ENCODE measurements at regions of chr2 and their contacts with region 1.

Region 1: DNA sequence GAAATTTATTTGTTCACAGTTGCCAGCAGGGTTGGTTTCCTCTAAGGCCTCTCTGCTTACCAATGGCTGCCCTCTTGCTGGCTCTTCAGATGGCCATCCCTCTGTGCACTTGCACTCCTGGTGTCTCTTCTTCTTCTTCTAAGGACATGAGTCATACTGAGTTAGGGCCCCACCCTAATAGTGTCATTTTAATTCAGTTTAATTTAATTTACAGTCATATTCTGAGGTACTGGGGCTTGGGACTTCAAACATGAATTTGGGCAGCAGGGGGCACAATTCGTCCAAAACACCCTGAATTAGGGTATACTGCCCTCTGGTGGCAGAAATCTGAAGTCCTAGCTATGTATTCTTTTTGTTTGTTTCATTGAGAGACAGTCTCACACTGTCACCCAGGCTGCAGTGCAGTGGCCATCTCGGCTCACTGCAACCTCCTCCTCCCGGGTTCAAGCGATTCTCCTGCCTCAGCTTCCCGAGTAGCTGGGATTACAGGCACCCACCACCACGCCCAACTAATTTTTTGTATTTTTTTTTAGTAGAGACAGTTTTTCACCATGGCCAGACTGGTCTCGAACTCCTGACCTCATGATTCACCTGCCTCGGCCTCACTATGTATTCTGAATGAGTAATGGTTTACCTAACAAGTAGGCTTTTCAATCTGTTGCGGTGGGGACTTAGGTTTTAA is 19.8 kb downstream of the SLC4A1AP start:
- DNase-seq: peak; percentile 91
- H3K4me3 ChIP-seq: no peak overlapping the region
- H3K27ac ChIP-seq: peak overlapping the region; percentile 97
- H3K4me1 ChIP-seq: peaks cover 25% of the 10 kb centered on the region
- H3K27me3 ChIP-seq: no peaks in the 10 kb centered on the region
- CTCF ChIP-seq: peak; percentile 89 to 99
- POLR2A ChIP-seq: no peak

Region 2: DNA sequence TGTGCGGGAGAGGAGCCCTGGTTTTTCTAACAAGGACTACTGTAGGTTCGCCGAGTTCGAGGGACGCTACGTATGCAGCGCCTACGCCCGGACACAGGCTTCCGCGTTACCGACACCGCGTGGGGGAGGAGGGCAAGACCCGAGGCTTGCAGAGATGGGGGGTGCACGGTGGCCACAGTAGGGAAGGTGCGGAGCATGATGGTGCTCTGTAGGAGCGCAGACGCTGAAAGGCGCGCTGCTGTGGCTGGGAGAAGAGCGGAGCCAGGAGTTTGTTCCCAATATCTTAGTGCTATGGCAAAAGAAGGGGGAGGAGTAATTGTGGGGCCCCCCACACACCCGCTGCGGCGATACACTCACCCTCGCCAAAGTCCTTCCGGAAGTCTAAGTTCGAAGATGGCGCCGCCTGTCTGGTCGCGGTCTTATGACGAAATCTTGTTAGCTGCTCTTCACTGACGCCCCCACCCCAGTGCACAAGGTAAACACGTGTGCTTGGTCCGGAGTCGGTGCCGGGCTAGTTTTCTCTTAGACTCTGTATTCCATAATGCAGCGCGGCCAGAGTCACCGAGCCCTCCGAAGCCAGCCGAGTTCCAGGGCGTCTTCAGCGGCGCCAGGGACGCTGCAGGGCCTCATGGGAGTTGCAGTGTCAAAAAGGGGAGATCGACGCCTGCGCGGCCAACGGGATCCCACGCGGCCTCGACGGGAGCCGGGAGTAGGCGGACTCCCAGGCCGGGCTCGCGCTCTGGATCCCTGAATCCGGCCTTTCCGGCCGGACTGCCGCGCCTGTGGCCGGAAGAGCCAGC is 326.9 kb before region 1 on chr2 and contains the start of gene GTF3C2:
- CTCF ChIA-PET with region 1: no interaction called
- POLR2A ChIA-PET with region 1: no interaction called
- dilution Hi-C with region 1: no loop called
- intact Hi-C with region 1: loop called (anchors 1 kb)
- DNase-seq: peak; percentile 98
- H3K4me3 ChIP-seq: peak within 1 kb of the TSS; percentile 40 to 90 (median 63)
- H3K27ac ChIP-seq: peak within 1 kb of the TSS; percentile 83
- H3K4me1 ChIP-seq: peaks cover 16% of the 10 kb centered on the region
- H3K27me3 ChIP-seq: no peaks in the 10 kb centered on the region
- CTCF ChIP-seq: no peak
- POLR2A ChIP-seq: no peak
- total RNA-seq, gene GTF3C2: 57.4 and 63.2 TPM in 2 replicates

Region 3: DNA sequence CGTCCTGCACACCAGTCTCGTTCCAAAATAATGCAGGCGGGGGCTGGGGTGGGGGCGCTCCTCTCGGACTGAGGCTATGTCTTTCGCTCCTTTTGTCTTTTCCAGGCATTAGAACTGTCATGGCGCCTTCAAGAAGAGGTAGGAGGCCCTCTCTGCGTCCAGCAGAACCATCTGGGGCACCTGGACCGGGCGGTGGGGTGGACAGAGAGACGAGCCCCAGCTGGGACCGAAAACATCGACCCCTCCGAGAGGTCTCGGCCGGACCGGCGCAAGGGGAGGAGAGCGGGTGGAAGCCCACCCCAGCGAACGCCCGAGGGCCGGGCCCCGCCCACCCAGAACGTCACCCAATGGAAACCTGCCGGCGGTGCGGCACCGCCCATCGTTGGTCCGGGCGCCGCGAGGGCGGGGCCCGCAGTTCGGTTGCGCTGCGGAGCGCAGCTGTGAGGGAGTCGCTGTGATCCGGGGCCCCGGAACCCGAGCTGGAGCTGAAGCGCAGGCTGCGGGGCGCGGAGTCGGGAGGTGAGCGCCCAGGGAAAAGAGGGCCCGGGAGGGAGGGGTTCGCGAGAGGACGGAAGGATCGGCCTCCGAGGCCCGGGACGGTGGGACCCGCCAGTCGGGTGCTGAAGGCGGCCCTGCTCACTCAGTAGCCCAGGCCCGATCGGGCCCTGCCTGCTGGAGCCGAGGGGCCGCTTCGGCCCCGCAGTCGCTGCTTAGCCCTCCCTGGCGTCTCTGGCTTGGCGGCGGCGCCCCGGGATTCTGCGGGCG is 255.1 kb before region 1 on chr2 and contains the start of gene NRBP1:
- CTCF ChIA-PET with region 1: interaction called, 12 read pairs
- POLR2A ChIA-PET with region 1: no interaction called
- dilution Hi-C with region 1: no loop called
- intact Hi-C with region 1: loop called (anchors 1 kb)
- DNase-seq: peak; percentile 89
- H3K4me3 ChIP-seq: peak within 1 kb of the TSS; percentile 68 to 93 (median 86)
- H3K27ac ChIP-seq: peak within 1 kb of the TSS; percentile 86
- H3K4me1 ChIP-seq: peaks cover 26% of the 10 kb centered on the region
- H3K27me3 ChIP-seq: no peaks in the 10 kb centered on the region
- CTCF ChIP-seq: no peak
- POLR2A ChIP-seq: peak; percentile 84
- total RNA-seq, gene NRBP1: 118 and 130 TPM in 2 replicates

Region 4: GRCh38 chr2:27628767-27629709 is 54.5 kb before region 1 on chr2 and contains the starts of genes CCDC121 and GPN1:
- CTCF ChIA-PET with region 1: interaction called, 14 read pairs
- POLR2A ChIA-PET with region 1: no interaction called
- dilution Hi-C with region 1: no loop called
- intact Hi-C with region 1: loop called (anchors 2 kb)
- DNase-seq: peak; percentile 93
- H3K4me3 ChIP-seq: peak within 1 kb of the TSS; percentile 98
- H3K27ac ChIP-seq: peak within 1 kb of the TSS; percentile 69
- H3K4me1 ChIP-seq: peaks cover 27% of the 10 kb centered on the region
- H3K27me3 ChIP-seq: no peaks in the 10 kb centered on the region
- CTCF ChIP-seq: no peak
- POLR2A ChIP-seq: peak; percentile 96
- total RNA-seq, gene CCDC121: 1.7 and 3.3 TPM in 2 replicates
- total RNA-seq, gene GPN1: 41.5 and 45.5 TPM in 2 replicates

Region 5: DNA sequence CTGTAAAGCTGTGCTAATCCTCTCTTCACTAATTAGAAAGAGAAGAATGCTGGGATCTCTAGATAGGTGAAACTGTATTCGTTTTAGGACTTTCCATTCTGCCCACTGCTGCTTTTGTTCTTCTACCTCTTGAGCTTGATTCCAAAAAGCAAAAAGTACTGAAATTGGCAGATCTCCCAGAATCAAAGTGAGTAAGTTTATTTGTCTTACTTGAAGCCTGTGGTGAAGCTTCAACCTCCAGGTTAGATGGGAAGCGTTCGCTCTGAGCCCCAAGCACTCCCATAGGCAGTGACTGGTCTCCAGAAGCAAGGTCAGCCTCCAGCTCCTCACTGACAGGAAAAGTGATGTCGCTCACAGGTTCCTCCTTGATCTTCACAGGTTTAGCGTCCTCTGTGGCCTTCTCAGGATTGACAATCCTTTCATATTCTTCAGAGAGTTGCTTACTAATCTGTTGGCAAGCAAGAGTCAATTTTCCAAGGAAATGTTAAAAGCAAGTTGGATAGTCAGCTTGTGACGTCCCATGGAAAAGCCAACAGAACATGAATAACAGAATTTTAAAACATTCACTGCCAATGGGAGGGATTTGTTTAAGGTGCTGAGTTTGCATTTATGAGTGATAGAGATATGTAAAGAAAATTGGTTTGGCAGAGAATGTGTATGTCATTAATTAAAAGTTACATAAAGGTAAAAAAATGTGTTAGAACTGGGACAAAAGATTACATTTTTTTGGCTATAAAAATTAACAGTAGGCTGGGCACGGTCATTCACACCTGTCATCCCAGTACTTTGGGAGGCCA is 28.2 kb before region 1 on chr2:
- CTCF ChIA-PET with region 1: interaction called, 18 read pairs
- POLR2A ChIA-PET with region 1: interaction called, 4 read pairs
- dilution Hi-C with region 1: no loop called
- intact Hi-C with region 1: no loop called
- DNase-seq: peak; percentile 8
- H3K4me3 ChIP-seq: no peak overlapping the region
- H3K27ac ChIP-seq: no peak overlapping the region
- H3K4me1 ChIP-seq: peaks cover 9% of the 10 kb centered on the region
- H3K27me3 ChIP-seq: no peaks in the 10 kb centered on the region
- CTCF ChIP-seq: no peak
- POLR2A ChIP-seq: no peak

Region 6: DNA sequence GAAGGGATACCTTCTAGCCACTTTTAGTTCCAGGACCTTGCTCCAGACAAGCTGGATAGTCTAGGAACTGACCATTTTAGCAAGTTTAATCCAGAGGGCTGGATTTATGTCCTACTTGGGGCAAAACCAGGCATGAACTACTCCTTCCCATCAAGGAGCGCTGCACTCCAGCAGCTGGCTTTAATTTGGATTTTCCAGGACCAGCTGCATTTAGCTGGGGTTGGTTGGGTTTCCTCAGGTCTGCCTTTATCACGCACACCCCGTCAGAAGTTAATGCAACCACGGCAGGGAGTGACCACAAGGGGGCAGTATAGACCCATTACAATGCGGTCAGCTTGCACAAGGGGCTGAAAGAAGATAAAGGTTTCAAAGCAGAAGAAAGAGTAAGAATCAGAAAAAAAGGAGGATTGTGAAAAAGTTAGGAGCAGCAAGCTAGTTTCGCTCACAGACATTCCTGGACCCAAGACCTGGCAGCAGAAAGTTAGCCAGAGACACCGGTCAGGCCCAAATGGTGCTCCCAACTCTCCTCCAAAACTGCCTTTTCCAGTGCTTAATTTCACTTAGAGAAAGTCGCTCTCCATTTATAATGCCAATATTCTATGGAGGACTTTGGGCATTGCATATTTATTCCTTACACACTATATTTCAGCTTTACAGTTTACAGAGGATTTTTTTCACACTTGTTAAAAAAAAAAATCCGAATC is 20.3 kb after region 1 on chr2:
- CTCF ChIA-PET with region 1: interaction called, 40 read pairs
- POLR2A ChIA-PET with region 1: no interaction called
- dilution Hi-C with region 1: no loop called
- intact Hi-C with region 1: no loop called
- DNase-seq: peak; percentile 90
- H3K4me3 ChIP-seq: no peak overlapping the region
- H3K27ac ChIP-seq: no peak overlapping the region
- H3K4me1 ChIP-seq: peaks cover 17% of the 10 kb centered on the region
- H3K27me3 ChIP-seq: no peaks in the 10 kb centered on the region
- CTCF ChIP-seq: peak; percentile 82 to 88
- POLR2A ChIP-seq: no peak

Region 7: DNA sequence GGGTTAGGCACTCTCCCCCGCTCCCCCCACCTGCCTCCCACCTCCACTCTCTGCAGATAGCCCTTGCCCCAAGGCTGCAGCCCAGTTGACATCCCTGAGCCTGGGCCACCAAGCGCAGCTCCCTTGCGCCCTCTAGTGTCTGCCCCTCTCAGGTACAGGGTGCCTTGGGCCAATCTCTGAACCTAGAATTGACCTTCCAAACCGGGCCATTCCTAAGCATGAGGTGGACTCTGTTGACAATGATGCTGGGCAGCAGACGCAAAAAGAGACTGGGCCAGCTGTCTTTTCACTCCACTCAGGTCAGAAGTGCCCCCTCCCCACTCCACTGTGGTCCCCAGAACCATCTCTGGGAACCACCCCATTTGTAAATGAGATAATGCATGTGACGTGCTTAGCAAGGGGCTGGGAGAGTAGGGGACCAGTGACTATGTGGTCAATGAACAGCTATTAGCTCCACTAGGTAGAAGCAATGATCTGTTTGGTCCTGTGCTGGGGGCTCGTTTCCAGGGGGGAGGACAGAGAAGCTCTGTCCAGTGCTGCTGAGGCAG is 769.1 kb after region 1 on chr2:
- CTCF ChIA-PET with region 1: interaction called, 9 read pairs
- POLR2A ChIA-PET with region 1: no interaction called
- dilution Hi-C with region 1: no loop called
- intact Hi-C with region 1: loop called (anchors 1 kb)
- DNase-seq: peak; percentile 58
- H3K4me3 ChIP-seq: no peak overlapping the region
- H3K27ac ChIP-seq: no peak overlapping the region
- H3K4me1 ChIP-seq: peaks cover 14% of the 10 kb centered on the region
- H3K27me3 ChIP-seq: no peaks in the 10 kb centered on the region
- CTCF ChIP-seq: peak; percentile 94 to 96
- POLR2A ChIP-seq: no peak